ENCODE measurements at regions of chr22 and their contacts with region 1.

Region 1: GRCh38 chr22:19419464-19420178 is 11.9 kb downstream of the HIRA start:
- DNase-seq: peak; percentile 42
- H3K4me3 Mint-ChIP-seq: peak overlapping the region; percentile 67
- H3K27ac Mint-ChIP-seq: peak overlapping the region; percentile 79
- H3K4me1 Mint-ChIP-seq: peaks cover 63% of the 10 kb centered on the region
- H3K27me3 Mint-ChIP-seq: no peaks in the 10 kb centered on the region

Region 2: DNA sequence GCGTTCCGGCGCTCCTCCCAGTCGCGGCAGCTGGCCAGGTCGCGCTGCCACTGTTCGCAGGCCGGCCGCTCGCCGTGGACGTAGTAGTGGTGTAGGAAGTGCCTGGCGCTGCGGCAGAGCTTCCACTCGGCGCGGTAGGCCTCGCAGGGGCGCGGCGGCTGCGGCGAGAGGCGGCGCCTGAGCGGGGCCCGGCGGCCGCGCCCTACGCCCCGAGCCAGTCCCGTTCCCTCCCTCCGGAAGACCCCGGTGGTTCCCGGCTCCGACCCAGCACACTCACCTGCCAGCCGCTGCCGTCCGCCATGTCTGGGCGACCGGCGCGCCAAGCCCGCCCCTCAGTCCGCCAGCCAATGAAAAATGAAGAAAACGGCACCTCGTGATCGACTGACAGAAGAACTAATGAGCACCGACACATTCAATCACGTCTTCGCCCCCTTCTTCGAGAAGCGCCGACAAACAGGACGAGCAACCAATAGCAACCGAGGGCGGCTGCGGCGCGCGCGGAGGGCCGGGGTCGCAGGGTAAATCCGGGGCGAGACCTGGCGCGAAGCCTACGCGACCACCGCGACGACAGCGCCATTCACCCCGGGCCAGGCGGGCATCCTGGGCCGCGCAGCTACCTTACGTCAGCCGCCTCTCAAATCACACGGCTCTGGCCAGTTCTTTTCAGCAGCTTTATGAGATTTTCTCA is 27.9 kb after region 1 on chr22 and contains the start of gene C22orf39:
- intact Hi-C with region 1: loop called (anchors 1 kb)
- DNase-seq: peak; percentile 88
- H3K4me3 Mint-ChIP-seq: peak within 1 kb of the TSS; percentile 95
- H3K27ac Mint-ChIP-seq: peak within 1 kb of the TSS; percentile 94
- H3K4me1 Mint-ChIP-seq: peaks cover 46% of the 10 kb centered on the region
- H3K27me3 Mint-ChIP-seq: no peaks in the 10 kb centered on the region
- total RNA-seq, gene C22orf39: 22.8 and 26.8 TPM in 2 replicates

Measured in activated T-helper 1 cell treated with anti-CD3 and anti-CD28 coated beads, Interleukin-12 subunit alpha, Interleukin-12 subunit beta, Interleukin-2, Interleukin-4 antibody, amounts not matched to agents 30 ng/mL and 10 ng/mL and 1 ng/mL, durations not matched to agents 14 hours and 24 hours and 36 hours (primary cell).